ENCODE measurements at regions of chr2 and their contacts with region 1.

Region 1: DNA sequence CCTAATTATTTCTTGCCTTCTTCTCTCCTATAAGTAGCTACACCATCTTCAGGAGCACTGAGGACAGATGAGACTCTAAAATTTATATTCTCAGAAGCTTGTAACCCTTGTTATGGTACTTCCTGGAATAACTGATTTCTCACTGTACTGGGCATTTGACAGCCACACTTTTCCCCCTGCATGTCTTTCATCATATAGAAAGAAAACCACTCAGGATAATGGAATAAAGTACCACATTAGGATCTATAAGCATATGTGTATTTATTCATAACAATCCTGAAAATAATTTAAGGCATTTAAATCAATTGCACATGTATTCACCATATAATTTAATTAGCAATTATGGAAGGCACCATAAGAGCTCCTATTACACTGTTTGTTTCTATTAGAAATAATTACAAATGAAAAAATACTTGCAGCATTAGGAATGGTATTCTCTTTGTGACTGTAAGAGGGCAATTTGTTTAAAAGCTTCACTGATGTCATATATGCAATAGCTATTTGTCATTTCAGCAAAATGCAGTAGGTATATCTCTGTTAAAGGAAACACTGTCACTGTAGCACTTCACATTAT is 216.9 kb upstream of the FSHR start:
- DNase-seq: no peak
- H3K4me3 ChIP-seq: no peak overlapping the region
- H3K27ac ChIP-seq: no peak overlapping the region
- H3K4me1 ChIP-seq: no peaks in the 10 kb centered on the region
- H3K27me3 ChIP-seq: no peaks in the 10 kb centered on the region
- CTCF ChIP-seq: no peak
- EP300 ChIP-seq: no peak
- POLR2A ChIP-seq: no peak

Region 2: DNA sequence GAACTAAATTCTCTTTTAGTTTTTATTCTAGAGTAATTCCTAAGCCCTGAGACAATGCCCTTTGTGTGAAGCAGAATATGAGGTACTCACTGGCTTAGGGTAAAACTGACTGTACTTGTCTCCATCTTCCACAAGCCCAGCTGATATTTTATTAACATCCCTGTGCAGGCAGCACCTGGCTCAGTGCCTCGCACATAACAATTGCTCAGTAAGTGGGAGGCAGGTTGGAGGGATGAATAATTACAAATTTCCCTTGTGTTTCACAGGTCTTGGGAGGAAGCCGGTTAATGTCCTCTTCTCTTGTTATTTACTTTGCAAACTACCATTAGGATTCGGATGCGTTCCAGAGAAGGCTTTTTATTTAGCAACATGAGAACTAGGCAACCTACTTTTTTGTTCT is 32.9 kb after region 1 on chr2:
- in situ Hi-C with region 1: no loop called
- intact Hi-C with region 1: loop called (anchors 1 kb)
- DNase-seq: no peak
- H3K4me3 ChIP-seq: no peak overlapping the region
- H3K27ac ChIP-seq: no peak overlapping the region
- H3K4me1 ChIP-seq: no peaks in the 10 kb centered on the region
- H3K27me3 ChIP-seq: no peaks in the 10 kb centered on the region
- CTCF ChIP-seq: no peak
- EP300 ChIP-seq: no peak
- POLR2A ChIP-seq: no peak